ENCODE measurements at regions of chr1 and their contacts with region 1.

Region 1: GRCh38 chr1:200038981-200039848 is 11.7 kb downstream of the NR5A2 start:
- DNase-seq: no peak
- ATAC-seq: peak; percentile 39 to 47
- H3K4me3 ChIP-seq: peak overlapping the region; percentile 53 to 65 (median 56)
- H3K27ac ChIP-seq: peak overlapping the region in 3 of 4 donors; percentile 34 to 56 (median 56)
- H3K4me1 ChIP-seq: peaks cover 24 to 35% of the 10 kb centered on the region in 2 donors
- H3K27me3 ChIP-seq: peaks cover 96 to 100% (median 98%) of the 10 kb centered on the region in 3 donors
- CTCF ChIP-seq: no peak
- POLR2A ChIP-seq: no peak

Region 2: DNA sequence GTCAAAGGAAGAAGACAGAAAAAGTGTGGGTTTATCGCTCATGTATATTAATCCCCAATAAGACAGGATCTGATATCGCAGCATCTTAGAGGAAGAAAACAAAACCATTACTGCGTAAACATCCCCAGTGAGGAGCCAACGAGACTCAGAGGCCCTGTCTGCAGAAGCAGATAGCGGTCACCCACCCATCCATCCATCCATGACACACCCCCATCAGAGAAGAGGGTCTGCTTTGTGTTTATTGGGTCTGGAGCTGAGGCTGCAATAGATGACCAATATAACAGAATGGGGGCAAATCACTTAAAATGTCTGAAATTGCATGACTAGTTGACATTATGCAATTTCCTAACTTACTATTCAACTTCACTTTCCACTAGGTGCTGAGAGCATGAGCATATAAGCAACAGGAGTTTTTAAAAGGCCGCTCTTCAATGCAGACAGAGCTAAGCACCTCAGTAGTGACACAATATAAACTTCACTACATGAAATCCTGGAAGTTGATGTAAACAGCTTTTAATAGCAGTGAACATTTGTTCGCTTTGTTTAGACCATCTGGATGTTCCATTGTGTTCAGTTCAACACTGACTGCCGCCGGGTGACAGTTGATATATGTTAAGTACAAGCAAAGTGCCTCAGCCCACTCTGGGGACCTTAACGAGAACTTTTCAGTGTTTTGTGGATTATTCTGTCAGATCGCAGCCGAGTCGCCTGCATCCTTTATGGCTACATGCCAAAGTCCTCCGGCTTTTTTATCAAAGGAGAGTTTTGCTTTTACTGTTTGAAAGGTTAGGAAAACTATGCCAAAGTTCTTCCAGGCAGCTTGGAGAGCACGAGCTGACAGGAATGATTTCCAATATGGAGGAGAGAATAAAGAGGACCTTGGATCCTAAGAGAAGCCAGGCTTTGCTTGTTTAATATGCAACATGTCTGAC is 203.2 kb after region 1 on chr1:
- in situ Hi-C with region 1: no loop called
- intact Hi-C with region 1: loop called (anchors 10 kb)
- DNase-seq: no peak
- ATAC-seq: peak; percentile 39 to 58
- H3K4me3 ChIP-seq: peak overlapping the region; percentile 22 to 38 (median 32)
- H3K27ac ChIP-seq: peak overlapping the region; percentile 25 to 68 (median 51)
- H3K4me1 ChIP-seq: peaks cover 5 to 16% of the 10 kb centered on the region in 2 donors
- H3K27me3 ChIP-seq: peaks cover 4 to 20% (median 4%) of the 10 kb centered on the region in 3 donors
- CTCF ChIP-seq: no peak
- POLR2A ChIP-seq: no peak

Measured in gastrocnemius medialis (tissue), 4 donors.